ENCODE measurements at regions of chr1 and their contacts with region 1.

Region 1: DNA sequence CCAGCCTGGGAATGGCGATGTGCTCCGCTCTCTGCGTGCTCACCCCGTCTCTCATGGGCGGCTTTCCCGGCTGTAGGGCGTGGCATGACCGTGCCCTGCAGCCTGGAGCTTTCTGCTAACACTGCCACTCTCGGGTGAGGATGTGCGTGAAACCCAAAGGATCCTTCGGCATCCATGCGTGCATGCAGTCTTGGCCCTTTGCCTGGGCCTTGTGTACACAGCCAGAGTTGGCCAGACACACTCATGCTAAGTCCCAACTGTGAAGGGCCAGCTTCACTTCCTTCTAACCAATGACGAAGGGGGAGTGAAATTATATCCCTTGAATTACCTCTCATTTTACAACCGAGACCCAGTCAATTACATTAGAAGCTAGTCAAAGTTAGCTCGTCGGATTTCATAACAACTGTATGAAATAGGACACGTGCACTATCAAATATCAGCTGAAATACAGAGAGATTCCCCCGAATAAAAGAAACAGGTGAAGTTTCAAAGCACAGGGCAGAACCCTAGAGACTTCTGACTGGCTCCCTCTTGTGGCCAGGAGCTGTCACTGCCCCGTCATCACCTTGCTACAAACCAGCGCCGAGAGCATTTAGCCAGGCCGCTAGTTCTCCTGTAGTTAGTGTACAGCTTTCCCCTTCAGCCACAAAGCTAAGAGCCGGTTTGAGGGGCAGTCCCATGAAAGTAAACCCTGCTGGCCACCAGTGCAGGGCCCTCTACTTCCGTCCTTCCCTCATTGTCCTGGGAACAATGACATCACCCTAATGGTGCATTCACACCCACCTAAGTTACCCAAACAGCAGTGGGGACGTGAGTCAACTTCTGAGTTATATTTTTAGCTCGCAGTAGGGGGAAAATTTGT is 63.4 kb upstream of the COA6 start:
- DNase-seq: peak; percentile 66
- ATAC-seq: peak; percentile 88

Region 2: GRCh38 chr1:233904633-233905415 is 405.0 kb before region 1 on chr1 and contains the start of gene SLC35F3:
- intact Hi-C with region 1: no loop called
- DNase-seq: peak; percentile 41
- ATAC-seq: peak; percentile 80
- total RNA-seq, gene SLC35F3: not detected

Region 3: DNA sequence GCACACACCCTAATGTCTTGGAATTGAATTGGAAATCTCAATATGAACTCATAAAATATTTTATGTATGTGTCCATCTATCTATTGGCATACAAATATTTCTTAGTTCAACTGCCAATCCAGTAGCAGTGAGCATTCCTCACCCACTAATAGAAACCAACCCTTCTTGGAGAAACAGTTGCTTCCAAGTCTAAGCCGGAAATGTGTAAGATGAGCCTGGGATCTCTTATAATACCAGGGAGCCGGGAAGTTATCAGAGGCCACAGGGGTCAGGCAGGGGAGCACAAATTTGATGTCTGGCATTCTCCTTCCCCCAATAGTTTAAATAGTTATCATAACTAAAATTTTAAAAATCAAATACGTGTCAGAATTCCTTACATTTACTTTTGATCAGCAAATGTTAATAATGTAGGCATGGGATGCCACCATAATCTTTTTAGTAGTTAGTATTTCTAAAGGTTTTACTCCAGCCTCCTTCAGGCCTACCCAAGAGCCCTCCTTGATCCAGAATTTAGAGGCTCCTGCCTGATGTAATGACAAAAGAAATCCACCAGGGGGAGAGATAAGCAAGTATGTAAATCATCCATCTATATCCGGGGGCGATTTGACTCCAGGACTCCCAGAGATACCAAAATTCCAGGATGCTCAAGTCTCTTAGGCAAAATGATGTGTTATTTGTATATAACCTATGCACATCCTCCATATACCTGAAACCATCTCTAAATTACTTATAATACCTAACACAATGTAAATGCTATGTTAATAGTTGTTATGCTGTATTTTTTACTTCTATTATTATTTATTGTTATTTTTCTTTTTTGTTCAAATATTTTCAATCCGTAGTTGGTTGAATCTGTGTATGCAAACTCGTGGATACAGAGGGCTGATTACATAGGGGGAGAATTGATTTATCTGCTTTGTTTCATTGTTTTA is 155.2 kb before region 1 on chr1:
- intact Hi-C with region 1: loop called (anchors 10 kb)
- DNase-seq: no peak
- ATAC-seq: no peak

Region 4: GRCh38 chr1:234398849-234399381 is 89.1 kb after region 1 on chr1:
- intact Hi-C with region 1: no loop called
- DNase-seq: no peak
- ATAC-seq: no peak

Region 5: DNA sequence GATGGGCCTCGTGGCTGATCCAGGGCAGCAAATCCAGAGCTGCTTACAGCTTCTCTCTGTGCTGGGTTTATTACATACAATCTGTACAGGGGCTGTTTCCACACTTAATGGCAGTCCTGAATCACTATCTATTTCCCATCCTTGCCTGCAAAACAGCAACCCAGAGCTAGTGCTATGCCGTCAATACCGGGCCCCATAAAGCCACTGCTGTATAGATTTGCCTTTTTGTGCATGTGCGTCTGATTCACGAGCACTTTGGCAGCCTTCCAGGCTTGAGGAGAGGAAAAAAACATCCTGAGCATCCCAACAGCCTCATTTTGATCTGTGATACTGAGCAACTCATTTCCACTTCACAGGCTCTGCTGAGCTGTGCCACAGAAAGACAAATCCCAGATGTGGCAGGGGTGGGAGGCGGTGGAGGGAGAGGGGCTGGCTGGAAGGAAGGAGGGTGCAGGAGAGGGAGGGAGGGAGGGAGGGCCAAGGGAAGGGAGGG is 234.3 kb after region 1 on chr1:
- intact Hi-C with region 1: no loop called
- DNase-seq: peak; percentile 54
- ATAC-seq: peak; percentile 82

Measured in Right ventricle myocardium superior (tissue), 1 donor.